ENCODE measurements at regions of chr10 and their contacts with region 1.

Region 1: DNA sequence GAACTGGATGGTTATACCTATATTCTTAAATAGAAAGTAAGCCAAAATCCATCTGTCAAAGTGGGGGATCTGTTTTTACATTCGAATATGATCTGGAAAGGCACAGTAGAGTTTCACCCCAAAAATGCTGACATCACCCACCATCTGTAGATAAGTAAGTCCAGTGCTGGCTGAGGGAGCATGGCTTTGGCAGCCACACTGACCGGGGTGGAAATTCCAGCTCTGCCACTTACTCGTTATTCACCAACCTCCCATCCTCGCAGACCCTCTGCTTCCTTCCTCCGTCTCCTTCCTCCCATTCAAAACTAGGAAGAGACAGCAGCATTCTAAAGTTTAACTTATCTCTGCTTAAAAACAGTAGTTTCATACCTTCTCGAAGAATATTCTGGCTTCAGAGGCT is 84.9 kb upstream of the GATA3 start:
- DNase-seq: no peak
- H3K4me3 ChIP-seq: no peak overlapping the region
- H3K27ac ChIP-seq: no peak overlapping the region
- H3K4me1 ChIP-seq: no peaks in the 10 kb centered on the region
- H3K27me3 ChIP-seq: no peaks in the 10 kb centered on the region
- CTCF ChIP-seq: no peak

Region 2: DNA sequence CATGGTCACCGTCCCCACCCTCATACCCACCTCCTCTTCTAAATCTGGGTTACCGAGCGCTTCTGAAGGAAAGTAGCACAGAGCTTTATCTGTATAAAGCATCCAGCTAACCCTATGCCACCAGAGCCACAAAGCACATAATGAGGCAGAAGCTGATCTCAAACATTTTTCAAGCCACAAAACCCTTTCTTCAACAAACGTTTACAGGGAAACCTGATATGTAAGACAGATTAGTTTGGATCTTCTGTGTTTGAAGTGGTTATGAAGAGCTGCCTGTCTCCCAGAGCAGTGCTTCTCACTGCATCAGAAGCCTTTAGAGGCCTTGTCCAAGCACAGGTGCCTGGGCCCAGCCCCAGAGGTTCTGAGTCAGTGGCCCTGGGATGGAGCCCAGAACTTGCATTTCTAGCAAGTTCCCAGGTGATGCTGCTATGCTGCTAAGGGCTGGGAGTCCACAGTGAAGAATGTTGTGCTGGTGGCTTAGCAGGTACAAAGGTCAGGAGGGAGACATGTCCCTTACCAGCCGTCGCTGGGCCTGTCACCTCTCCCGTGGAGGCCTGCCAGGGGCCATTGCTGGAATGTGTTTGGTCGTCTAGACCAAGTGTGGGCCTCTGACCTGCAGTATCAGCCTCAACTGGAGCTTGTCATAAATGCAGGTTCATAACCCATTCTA is 60.9 kb before region 1 on chr10:
- CTCF ChIA-PET with region 1: no interaction called
- dilution Hi-C with region 1: no loop called
- in situ Hi-C with region 1: loop called in 1 of 2 experiments (anchors 10 kb)
- intact Hi-C with region 1: no loop called
- DNase-seq: no peak
- H3K4me3 ChIP-seq: no peak overlapping the region
- H3K27ac ChIP-seq: no peak overlapping the region
- H3K4me1 ChIP-seq: no peaks in the 10 kb centered on the region
- H3K27me3 ChIP-seq: no peaks in the 10 kb centered on the region
- CTCF ChIP-seq: no peak